Esophagus squamous epithelium (tissue), 5 donors: ENCODE measurements at regions of chr6 and their contacts with region 1.

Region 1: GRCh38 chr6:159789377-159790148 is at the start of gene TCP1:
- DNase-seq: peak; percentile 98
- H3K4me3 ChIP-seq: peak within 1 kb of the TSS; percentile 68 to 96 (median 77)
- H3K27ac ChIP-seq: peak within 1 kb of the TSS; percentile 95 to 100 (median 98)
- H3K4me1 ChIP-seq: peaks cover 14 to 67% (median 42%) of the 10 kb centered on the region in 3 donors
- H3K27me3 ChIP-seq: no peaks in the 10 kb centered on the region
- CTCF ChIP-seq: peak in 2 of 6 experiments; percentile 12 to 13
- POLR2A ChIP-seq: peak in 3 of 4 donors; percentile 93 to 97 (median 94)
- total RNA-seq, gene TCP1: 75.1 to 189 (median 172) TPM

Region 2: GRCh38 chr6:159665868-159666635 is 123.5 kb before region 1 on chr6:
- intact Hi-C with region 1: no loop called
- DNase-seq: no peak
- H3K4me3 ChIP-seq: no peak overlapping the region
- H3K27ac ChIP-seq: no peak overlapping the region
- H3K4me1 ChIP-seq: no peaks in the 10 kb centered on the region
- H3K27me3 ChIP-seq: no peaks in the 10 kb centered on the region
- CTCF ChIP-seq: no peak
- POLR2A ChIP-seq: no peak

Region 3: GRCh38 chr6:159687341-159687740 is 102.2 kb before region 1 on chr6:
- intact Hi-C with region 1: loop called (anchors 5 kb)
- DNase-seq: no peak
- H3K4me3 ChIP-seq: peak overlapping the region in 1 of 4 donors; percentile 92
- H3K27ac ChIP-seq: no peak overlapping the region
- H3K4me1 ChIP-seq: peaks cover 7 to 78% (median 34%) of the 10 kb centered on the region in 3 donors
- H3K27me3 ChIP-seq: no peaks in the 10 kb centered on the region
- CTCF ChIP-seq: no peak
- POLR2A ChIP-seq: no peak

Region 4: GRCh38 chr6:159726918-159727716 is 62.4 kb before region 1 on chr6 and contains the start of gene WTAP:
- intact Hi-C with region 1: loop called (anchors 5 kb)
- DNase-seq: peak; percentile 89
- H3K4me3 ChIP-seq: peak within 1 kb of the TSS; percentile 76 to 97 (median 86)
- H3K27ac ChIP-seq: peak within 1 kb of the TSS; percentile 98 to 100 (median 100)
- H3K4me1 ChIP-seq: peaks cover 12 to 73% (median 31%) of the 10 kb centered on the region in 3 donors
- H3K27me3 ChIP-seq: no peaks in the 10 kb centered on the region
- CTCF ChIP-seq: peak in 1 of 6 experiments; percentile 14
- POLR2A ChIP-seq: peak in 3 of 4 donors; percentile 50 to 84 (median 82)
- total RNA-seq, gene WTAP: 45.0 to 105 (median 82.6) TPM

Region 5: DNA sequence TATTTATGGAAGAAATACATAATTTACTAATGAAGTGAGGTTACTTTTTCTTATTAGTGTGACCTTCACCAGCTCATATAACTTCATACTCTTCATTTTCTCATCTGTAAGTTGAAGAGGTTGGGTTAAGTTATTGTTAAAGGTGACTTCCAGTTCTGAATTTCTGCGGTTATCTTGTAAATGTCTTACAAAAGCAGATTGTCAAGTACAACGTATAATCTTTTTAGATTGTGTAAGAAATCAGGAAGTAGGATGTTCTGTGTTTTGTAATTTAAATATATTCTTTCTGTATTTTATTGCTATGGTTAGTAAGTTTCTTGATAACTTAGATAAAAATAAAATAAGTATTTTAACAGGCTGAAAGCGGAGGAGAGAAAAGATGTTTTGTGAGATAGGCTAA is 50.2 kb before region 1 on chr6:
- intact Hi-C with region 1: no loop called
- DNase-seq: no peak
- H3K4me3 ChIP-seq: no peak overlapping the region
- H3K27ac ChIP-seq: peak overlapping the region in 1 of 4 donors; percentile 68
- H3K4me1 ChIP-seq: peaks cover 5 to 73% (median 14%) of the 10 kb centered on the region in 3 donors
- H3K27me3 ChIP-seq: no peaks in the 10 kb centered on the region
- CTCF ChIP-seq: no peak
- POLR2A ChIP-seq: no peak